Endothelial cell of umbilical vein (primary cell): ENCODE measurements at regions of chr15 and their contacts with region 1.

Region 1: GRCh38 chr15:43510200-43511011 is 7.0 kb upstream of the MAP1A start:
- DNase-seq: peak; percentile 98
- H3K4me3 ChIP-seq: peak overlapping the region; percentile 64 to 81 (median 79)
- H3K27ac ChIP-seq: peak overlapping the region; percentile 77
- H3K4me1 ChIP-seq: peaks cover 27% of the 10 kb centered on the region
- H3K27me3 ChIP-seq: no peaks in the 10 kb centered on the region
- CTCF ChIP-seq: peak in 1 of 2 donors; percentile 20
- POLR2A ChIP-seq: peak; percentile 71

Region 2: DNA sequence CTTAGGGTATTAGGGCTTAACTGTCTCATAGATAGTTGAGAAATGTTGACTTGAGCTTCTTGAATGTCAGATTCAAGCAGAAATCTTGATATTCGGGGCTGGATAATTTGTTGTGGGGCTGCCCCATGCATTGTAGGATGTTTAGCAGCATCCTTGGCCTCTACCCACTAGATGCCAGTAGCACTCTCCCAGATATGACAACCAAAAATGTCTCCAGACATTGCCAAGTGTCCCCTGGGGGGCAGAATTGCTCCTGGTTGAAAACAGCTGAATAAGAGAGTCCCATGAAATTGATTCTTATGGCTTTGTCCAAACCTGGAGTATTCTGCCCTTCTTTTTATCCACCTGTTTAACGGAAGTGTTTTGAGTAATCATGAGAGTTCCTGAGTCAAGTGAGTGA is 164.1 kb before region 1 on chr15:
- CTCF ChIA-PET with region 1: no interaction called
- POLR2A ChIA-PET with region 1: no interaction called
- dilution Hi-C with region 1: no loop called
- intact Hi-C with region 1: no loop called
- DNase-seq: no peak
- H3K4me3 ChIP-seq: no peak overlapping the region
- H3K27ac ChIP-seq: no peak overlapping the region
- H3K4me1 ChIP-seq: no peaks in the 10 kb centered on the region
- H3K27me3 ChIP-seq: no peaks in the 10 kb centered on the region
- CTCF ChIP-seq: no peak
- POLR2A ChIP-seq: no peak

Region 3: DNA sequence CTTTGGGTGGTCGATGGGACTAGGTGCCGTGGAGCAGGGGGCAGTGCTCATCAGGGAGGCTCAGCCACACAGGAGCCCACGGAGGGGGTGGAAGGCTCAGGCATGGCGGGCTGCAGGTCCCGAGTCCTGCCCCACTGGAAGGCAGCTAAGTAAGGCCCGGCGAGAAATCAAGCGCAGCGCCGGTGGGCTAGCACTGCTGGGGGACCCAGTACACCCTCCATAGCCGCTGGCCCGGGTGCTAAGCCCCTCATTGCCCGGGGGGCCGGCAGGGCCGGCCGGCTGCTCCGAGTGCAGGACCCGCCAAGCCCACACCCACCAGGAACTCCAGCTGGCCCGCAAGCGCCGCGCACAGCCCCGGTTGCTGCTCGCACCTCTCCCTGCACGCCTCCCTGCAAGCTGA is 36.5 kb before region 1 on chr15:
- CTCF ChIA-PET with region 1: interaction called, 11 read pairs
- POLR2A ChIA-PET with region 1: no interaction called
- dilution Hi-C with region 1: no loop called
- intact Hi-C with region 1: no loop called
- DNase-seq: no peak
- H3K4me3 ChIP-seq: no peak overlapping the region
- H3K27ac ChIP-seq: no peak overlapping the region
- H3K4me1 ChIP-seq: no peaks in the 10 kb centered on the region
- H3K27me3 ChIP-seq: no peaks in the 10 kb centered on the region
- CTCF ChIP-seq: no peak
- POLR2A ChIP-seq: no peak

Region 4: GRCh38 chr15:43492673-43493601 is 17.5 kb before region 1 on chr15 and contains the start of gene TP53BP1:
- CTCF ChIA-PET with region 1: interaction called, 21 read pairs
- POLR2A ChIA-PET with region 1: interaction called, 6 read pairs
- dilution Hi-C with region 1: no loop called
- intact Hi-C with region 1: loop called (anchors 1 kb)
- DNase-seq: peak; percentile 95
- H3K4me3 ChIP-seq: peak within 1 kb of the TSS; percentile 76 to 83 (median 76)
- H3K27ac ChIP-seq: peak within 1 kb of the TSS; percentile 45
- H3K4me1 ChIP-seq: peaks cover 18% of the 10 kb centered on the region
- H3K27me3 ChIP-seq: no peaks in the 10 kb centered on the region
- CTCF ChIP-seq: no peak
- POLR2A ChIP-seq: peak; percentile 40
- total RNA-seq, gene TP53BP1: 59.5 and 60.2 TPM in 2 replicates

Region 5: GRCh38 chr15:43531018-43531670 is 20.7 kb after region 1 on chr15:
- CTCF ChIA-PET with region 1: interaction called, 25 read pairs
- POLR2A ChIA-PET with region 1: no interaction called
- dilution Hi-C with region 1: no loop called
- intact Hi-C with region 1: no loop called
- DNase-seq: no peak
- H3K4me3 ChIP-seq: no peak overlapping the region
- H3K27ac ChIP-seq: no peak overlapping the region
- H3K4me1 ChIP-seq: no peaks in the 10 kb centered on the region
- H3K27me3 ChIP-seq: no peaks in the 10 kb centered on the region
- CTCF ChIP-seq: no peak
- POLR2A ChIP-seq: no peak

Region 6: DNA sequence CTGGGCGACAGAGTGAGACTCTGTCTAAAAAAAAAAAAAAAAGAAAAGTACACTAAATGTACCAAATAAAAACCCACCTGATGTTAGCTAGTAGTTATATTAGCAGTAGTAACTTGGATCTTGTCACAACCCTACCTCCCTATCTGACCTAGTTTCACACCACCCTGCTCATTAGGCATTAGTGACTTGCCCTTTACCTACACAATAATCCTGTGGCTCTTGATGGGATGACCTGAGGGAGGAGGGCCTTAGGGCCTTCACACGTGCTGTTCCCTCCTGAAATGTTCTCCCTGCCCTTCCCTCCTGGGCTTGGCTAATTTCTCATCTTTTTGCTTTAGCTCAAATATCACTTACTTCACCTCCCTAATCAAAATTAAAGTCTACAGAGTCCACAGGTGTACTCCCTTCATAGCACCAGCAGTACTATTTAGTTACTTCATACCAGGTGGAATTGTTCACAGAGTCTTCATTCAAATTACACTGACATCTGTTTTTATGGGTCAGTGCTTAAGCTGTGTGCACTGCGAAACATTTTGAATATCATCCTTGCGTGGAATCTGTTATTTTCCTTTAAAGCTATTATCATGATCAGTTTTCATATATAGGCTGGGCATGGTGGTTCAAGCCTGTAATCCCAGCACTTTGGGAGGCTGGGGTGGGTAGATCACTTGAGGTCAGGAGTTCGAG is 278.9 kb after region 1 on chr15:
- CTCF ChIA-PET with region 1: no interaction called
- POLR2A ChIA-PET with region 1: no interaction called
- dilution Hi-C with region 1: no loop called
- intact Hi-C with region 1: no loop called
- DNase-seq: no peak
- H3K4me3 ChIP-seq: no peak overlapping the region
- H3K27ac ChIP-seq: no peak overlapping the region
- H3K4me1 ChIP-seq: peaks cover 17% of the 10 kb centered on the region
- H3K27me3 ChIP-seq: no peaks in the 10 kb centered on the region
- CTCF ChIP-seq: no peak
- POLR2A ChIP-seq: no peak

Region 7: GRCh38 chr15:43824302-43825246 is 314.2 kb after region 1 on chr15 and contains the start of gene MFAP1:
- CTCF ChIA-PET with region 1: no interaction called
- POLR2A ChIA-PET with region 1: no interaction called
- dilution Hi-C with region 1: no loop called
- intact Hi-C with region 1: no loop called
- DNase-seq: peak; percentile 97
- H3K4me3 ChIP-seq: peak within 1 kb of the TSS; percentile 43 to 91 (median 86)
- H3K27ac ChIP-seq: peak within 1 kb of the TSS; percentile 77
- H3K4me1 ChIP-seq: peaks cover 22% of the 10 kb centered on the region
- H3K27me3 ChIP-seq: no peaks in the 10 kb centered on the region
- CTCF ChIP-seq: no peak
- POLR2A ChIP-seq: peak; percentile 97
- total RNA-seq, gene MFAP1: 29.3 and 30.5 TPM in 2 replicates